Sigmoid colon (tissue), 7 donors: ENCODE measurements at regions of chr13 and their contacts with region 1.

Region 1: DNA sequence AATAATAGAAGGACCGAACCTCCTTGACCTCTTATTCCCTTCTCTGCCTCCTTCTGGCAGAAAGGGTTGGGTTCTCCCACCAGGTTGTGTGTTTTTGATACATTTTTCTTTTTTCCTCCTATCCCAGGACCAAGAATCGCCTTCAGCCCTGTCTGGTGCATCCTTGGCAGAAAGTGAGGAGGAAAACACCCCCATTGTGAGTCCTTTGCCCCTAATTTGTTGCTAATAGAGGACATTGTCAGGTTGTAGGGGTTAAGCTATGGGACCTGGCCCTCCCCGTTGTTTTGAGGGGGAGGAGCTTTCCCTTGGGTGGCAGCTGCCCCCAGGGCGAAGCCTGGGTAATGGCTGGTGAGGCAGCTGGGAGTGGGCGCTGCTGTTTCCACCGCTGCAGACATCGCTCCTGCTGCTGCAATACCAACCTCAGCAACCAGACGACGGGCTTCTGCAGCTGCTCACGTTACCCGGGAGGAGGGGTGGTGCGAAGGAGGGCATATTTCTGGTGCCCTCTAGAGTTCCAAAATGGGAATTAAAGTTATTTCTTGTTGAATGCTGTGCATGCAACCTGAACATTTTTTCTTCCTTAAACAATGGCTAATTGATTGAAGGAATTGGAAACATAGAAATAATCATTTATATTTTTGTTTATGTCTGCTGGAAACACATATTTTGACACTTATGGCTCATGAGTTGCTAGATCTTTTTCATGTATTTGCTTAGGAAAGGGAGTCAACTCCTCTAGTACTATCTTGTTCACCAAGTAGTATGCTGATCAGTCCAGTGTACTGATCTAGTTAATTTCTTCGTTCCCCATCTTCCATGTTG is 1.5 kb downstream of the ZMYM2 start:
- DNase-seq: peak; percentile 93
- H3K4me3 ChIP-seq: peak overlapping the region; percentile 86 to 90 (median 88)
- H3K27ac ChIP-seq: peak overlapping the region; percentile 98 to 100 (median 100)
- H3K4me1 ChIP-seq: peaks cover 0 to 46% (median 44%) of the 10 kb centered on the region in 4 donors
- H3K27me3 ChIP-seq: no peaks in the 10 kb centered on the region
- CTCF ChIP-seq: peak; percentile 84 to 96 (median 95)
- EP300 ChIP-seq: no peak
- POLR2A ChIP-seq: peak; percentile 41 to 47

Region 2: DNA sequence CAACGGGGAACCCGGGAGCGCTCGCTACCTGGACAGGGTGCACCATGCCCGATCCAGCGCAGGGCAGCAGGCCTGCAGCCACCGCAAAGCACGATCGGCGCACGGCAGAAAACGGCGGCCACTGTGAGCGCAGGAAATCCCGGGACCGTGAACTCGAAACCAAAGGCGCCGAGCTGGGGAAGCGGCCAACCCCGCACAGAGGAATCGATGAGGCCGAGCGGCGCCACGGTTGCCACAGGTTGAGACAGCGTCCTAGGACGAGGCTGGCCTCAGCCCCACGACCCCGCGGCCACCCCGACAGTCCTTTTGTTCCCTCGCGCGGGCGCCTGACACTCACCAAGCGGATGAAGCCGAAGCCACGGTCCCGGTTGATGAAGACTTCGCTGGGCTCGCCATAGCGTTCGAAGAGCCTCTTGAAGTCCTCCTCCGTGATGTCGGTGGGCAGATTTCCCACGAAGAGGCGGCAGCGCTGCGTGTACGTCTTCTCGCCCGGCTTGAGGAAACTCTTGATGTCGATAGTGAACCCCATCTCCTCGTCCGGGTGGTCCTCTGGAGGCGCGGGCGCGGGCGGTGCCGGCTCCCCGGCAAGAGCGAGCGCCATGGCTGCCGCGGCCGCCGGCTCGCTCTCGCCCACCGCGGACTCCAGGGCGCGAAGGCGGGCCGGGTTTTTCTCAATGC is 177.9 kb before region 1 on chr13:
- intact Hi-C with region 1: loop called (anchors 5 kb)
- DNase-seq: peak; percentile 81
- H3K4me3 ChIP-seq: peak overlapping the region; percentile 76 to 95 (median 85)
- H3K27ac ChIP-seq: peak overlapping the region; percentile 93 to 98 (median 94)
- H3K4me1 ChIP-seq: peaks cover 0 to 17% (median 4%) of the 10 kb centered on the region in 4 donors
- H3K27me3 ChIP-seq: no peaks in the 10 kb centered on the region
- CTCF ChIP-seq: no peak
- EP300 ChIP-seq: no peak
- POLR2A ChIP-seq: no peak

Region 3: DNA sequence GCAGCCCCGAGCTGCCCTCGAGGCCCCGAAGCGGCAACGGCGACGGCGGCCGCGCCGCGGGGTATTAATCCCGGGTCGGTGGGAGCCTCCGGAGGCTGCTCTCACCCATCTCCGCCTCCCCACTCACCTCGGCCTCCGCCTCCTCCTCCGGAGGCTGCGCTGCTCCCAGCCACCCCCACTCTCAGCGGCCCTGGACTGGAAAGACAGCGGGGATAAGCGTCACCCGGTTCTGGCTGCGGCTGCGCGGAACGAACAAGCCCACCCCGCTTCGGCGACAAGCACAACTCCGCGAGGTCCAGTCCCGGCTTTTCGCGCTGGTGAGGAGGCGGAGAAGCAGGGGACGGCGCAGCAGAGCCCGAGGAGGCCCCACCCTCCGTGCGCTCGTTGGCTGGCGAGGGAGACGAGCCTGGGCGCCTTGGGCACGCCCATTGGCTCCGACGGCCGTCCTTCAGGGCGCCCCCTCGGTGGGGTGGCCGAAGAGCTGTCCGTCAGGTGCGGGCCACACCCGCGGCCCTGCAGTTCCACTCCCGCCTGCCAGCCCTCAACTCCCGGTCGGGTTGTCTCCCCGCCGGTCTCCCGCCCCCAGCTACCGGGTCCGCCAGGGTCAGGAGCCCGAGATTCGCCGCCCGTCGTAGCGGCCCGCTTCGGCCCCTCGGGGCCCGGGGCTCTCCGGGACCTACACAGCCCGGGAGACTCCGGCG is 96.6 kb before region 1 on chr13 and contains the start of gene ZMYM5:
- intact Hi-C with region 1: loop called (anchors 1 kb)
- DNase-seq: peak; percentile 99
- H3K4me3 ChIP-seq: peak within 1 kb of the TSS; percentile 66 to 95 (median 90)
- H3K27ac ChIP-seq: peak within 1 kb of the TSS; percentile 91 to 100 (median 100)
- H3K4me1 ChIP-seq: peaks cover 0 to 27% (median 25%) of the 10 kb centered on the region in 4 donors
- H3K27me3 ChIP-seq: no peaks in the 10 kb centered on the region
- CTCF ChIP-seq: no peak
- EP300 ChIP-seq: no peak
- POLR2A ChIP-seq: peak; percentile 88 to 90
- total RNA-seq, gene ZMYM5: 14.7 to 24.5 (median 17.4) TPM

Region 4: DNA sequence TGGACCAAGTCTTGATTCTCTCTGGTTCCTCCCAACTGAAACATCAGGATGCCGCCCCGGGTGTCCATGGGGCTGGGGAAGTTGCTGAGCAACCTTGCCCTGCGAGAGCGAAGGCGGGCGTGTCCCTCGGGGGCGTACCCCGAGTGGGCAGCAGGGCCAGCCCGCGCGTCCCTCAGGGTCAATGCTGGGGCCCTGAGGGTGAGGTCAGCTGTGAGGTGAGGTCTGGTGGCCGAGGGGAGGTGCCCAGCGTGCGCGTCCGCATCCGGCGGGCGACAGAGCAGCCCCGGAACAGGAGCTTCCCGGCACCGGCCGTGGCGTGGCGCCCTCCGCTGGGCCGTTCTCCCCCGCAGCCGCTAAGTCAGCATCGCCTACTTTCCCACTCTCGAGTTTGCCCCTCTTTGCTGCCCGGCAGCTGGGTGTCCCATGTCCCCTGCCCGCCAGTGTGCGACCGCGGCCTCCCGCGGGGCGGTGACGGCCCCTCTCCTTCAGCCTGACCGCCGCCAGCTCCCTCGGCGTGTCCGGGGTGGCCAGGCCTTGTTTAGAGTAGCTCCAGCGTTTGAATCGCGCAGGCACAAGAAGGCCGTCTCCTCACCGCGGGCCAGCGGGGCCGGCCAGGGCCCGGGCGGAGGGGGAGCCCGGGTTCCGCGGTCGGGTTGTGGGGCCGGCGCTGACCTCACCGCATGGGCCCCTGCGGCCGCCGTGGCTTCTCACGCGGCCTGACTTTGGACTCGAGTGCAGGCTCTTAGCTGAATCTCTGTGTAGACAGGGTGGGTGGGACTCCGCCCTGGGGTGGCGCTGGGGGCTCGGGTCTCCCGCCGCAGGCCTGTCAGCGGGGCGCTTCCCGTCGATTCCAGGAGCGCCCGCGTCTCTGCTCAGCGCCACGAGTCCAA is 167.8 kb after region 1 on chr13:
- intact Hi-C with region 1: loop called (anchors 5 kb)
- DNase-seq: peak; percentile 82
- H3K4me3 ChIP-seq: peak overlapping the region; percentile 56 to 68 (median 62)
- H3K27ac ChIP-seq: peak overlapping the region; percentile 85 to 92 (median 89)
- H3K4me1 ChIP-seq: peaks cover 0 to 33% (median 26%) of the 10 kb centered on the region in 4 donors
- H3K27me3 ChIP-seq: peaks cover 0 to 10% (median 0%) of the 10 kb centered on the region in 3 donors
- CTCF ChIP-seq: peak in 3 of 4 experiments; percentile 15 to 47 (median 40)
- EP300 ChIP-seq: no peak
- POLR2A ChIP-seq: no peak

Region 5: GRCh38 chr13:20141238-20142022 is 181.4 kb after region 1 on chr13:
- intact Hi-C with region 1: no loop called
- DNase-seq: no peak
- H3K4me3 ChIP-seq: no peak overlapping the region
- H3K27ac ChIP-seq: no peak overlapping the region
- H3K4me1 ChIP-seq: peaks cover 0 to 15% (median 10%) of the 10 kb centered on the region in 4 donors
- H3K27me3 ChIP-seq: peaks cover 20 to 85% (median 35%) of the 10 kb centered on the region in 3 donors
- CTCF ChIP-seq: no peak
- EP300 ChIP-seq: no peak
- POLR2A ChIP-seq: no peak